ENCODE measurements at regions of chr16 and their contacts with region 1.

Region 1: GRCh38 chr16:84511180-84511824 is 6.8 kb upstream of the MEAK7 start:
- DNase-seq: peak; percentile 77
- H3K4me3 ChIP-seq: 0 out of 2 replicates have a peak overlapping the region, but pooled peaks have one; percentile 29
- H3K27ac ChIP-seq: no peak overlapping the region
- H3K27me3 ChIP-seq: no peaks in the 10 kb centered on the region
- CTCF ChIP-seq: peak; percentile 89

Region 2: DNA sequence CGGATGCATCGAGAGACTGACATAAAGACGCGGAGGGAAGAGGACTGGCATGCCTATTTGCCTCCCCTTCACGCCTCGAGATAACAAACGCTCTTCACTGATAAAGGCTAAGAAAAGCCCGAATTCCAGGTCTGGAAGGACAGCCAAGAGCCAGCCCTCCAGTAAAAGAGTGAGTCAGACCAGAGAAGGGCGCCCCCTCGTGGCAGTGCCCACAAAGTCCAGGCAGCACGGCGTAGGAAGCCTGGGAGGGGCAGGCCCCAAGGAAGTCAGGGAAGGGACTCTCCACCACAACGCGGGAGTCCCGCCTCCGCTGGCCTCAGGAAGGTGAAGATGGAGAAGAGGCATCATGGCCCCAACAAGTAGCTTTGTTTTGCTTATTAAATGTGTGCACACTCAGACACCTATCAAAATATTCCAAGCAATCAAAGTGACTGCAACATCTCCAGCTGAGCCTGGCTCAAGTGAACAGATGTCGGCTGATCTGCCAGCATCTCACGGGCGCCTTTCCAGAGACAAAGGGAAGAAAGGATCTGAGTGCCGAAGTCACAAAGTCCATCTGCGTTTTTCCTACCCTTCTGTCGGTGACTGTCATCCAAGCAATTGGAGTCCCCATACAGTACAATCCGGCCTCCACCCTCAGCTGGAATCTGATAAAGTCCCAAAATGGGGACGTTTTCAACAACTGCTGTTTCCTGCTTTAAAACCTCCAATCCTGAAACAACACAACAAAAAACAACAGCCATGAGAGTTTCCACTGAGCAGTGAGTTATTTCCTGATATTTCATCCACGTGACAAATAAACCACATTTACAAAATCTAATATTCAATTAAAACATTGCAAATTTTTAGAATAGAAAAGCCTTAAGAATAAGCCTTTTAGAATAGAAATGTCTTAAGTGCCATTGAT is 448.3 kb before region 1 on chr16:
- CTCF ChIA-PET with region 1: no interaction called
- POLR2A ChIA-PET with region 1: no interaction called
- DNase-seq: peak; percentile 48
- H3K4me3 ChIP-seq: no peak overlapping the region
- H3K27ac ChIP-seq: no peak overlapping the region
- H3K27me3 ChIP-seq: no peaks in the 10 kb centered on the region
- CTCF ChIP-seq: peak; percentile 87

Region 3: DNA sequence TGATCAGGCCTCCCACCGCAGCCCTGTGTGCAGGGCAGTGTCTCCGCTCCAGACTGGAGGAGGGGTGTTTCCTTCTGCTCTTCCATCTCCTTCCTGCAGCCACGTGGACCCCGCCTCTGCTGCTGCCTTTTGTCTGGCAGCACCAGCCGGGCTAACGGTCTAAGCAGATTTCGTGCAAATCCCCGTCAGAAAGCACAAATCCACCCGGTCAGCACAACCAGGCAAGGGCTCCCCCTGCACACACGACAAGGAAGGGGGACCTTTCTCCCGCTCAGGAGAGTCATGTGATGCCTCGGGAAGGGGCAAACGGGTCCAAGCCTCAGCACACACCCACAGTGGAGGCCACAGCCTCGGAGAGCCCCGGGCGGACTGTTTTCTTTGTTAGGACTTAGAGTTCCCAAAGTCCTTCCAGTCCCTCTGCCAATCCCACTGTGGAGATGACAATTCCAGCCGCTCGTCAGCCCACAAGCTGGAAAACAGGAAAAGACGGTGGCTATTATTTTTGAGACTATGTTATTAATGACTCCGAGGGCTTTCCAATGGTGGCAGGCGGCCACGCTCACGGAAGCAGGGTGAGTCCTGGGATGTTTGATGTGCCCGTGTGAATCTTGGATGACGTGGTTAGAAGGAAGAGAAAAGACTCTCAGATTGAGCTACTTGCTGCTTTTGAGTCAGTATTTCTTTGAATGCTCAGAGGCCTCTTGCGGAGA is 15.6 kb after region 1 on chr16:
- CTCF ChIA-PET with region 1: interaction called, 23 read pairs
- POLR2A ChIA-PET with region 1: no interaction called
- DNase-seq: no peak
- H3K4me3 ChIP-seq: no peak overlapping the region
- H3K27ac ChIP-seq: peak overlapping the region; percentile 61
- H3K27me3 ChIP-seq: no peaks in the 10 kb centered on the region
- CTCF ChIP-seq: no peak

Region 4: DNA sequence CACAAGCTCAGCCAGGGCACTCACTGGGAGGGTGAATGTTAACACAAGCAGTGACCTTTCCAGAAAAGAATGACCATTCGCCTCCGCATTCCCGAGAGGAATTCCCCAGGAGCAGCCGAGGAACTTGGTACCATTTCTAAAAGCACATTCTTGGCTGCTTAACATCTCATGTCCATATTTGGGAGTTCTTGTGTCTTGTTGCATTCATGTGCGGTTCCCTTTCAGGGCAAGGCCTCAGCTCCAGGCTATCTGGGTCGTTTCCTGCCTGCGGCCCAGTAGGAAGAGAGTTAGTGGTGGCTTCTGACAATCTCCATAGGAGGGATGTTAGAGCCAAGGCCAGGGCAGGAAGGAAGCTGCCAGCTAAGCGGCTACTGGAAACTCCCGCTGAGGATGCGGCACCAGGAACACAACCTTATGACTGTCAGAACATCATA is 21.0 kb after region 1 on chr16:
- CTCF ChIA-PET with region 1: interaction called, 23 read pairs
- POLR2A ChIA-PET with region 1: no interaction called
- DNase-seq: peak; percentile 94
- H3K4me3 ChIP-seq: no peak overlapping the region
- H3K27ac ChIP-seq: peak overlapping the region; percentile 98
- H3K27me3 ChIP-seq: no peaks in the 10 kb centered on the region
- CTCF ChIP-seq: no peak

Region 5: GRCh38 chr16:84599521-84600202 is 88.4 kb after region 1 on chr16:
- CTCF ChIA-PET with region 1: interaction called, 18 read pairs
- POLR2A ChIA-PET with region 1: interaction called, 3 read pairs
- DNase-seq: peak; percentile 45
- H3K4me3 ChIP-seq: peak overlapping the region; percentile 46
- H3K27ac ChIP-seq: peak overlapping the region; percentile 95
- H3K27me3 ChIP-seq: no peaks in the 10 kb centered on the region
- CTCF ChIP-seq: no peak

Measured in AG04450 (cell line).